Activated T-helper 1 cell treated with anti-CD3 and anti-CD28 coated beads, Interleukin-12 subunit alpha, Interleukin-12 subunit beta, Interleukin-2, Interleukin-4 antibody, amounts not matched to agents 30 ng/mL and 10 ng/mL and 1 ng/mL, durations not matched to agents 14 hours and 24 hours and 36 hours (primary cell): ENCODE measurements at regions of chr6 and their contacts with region 1.

Region 1: DNA sequence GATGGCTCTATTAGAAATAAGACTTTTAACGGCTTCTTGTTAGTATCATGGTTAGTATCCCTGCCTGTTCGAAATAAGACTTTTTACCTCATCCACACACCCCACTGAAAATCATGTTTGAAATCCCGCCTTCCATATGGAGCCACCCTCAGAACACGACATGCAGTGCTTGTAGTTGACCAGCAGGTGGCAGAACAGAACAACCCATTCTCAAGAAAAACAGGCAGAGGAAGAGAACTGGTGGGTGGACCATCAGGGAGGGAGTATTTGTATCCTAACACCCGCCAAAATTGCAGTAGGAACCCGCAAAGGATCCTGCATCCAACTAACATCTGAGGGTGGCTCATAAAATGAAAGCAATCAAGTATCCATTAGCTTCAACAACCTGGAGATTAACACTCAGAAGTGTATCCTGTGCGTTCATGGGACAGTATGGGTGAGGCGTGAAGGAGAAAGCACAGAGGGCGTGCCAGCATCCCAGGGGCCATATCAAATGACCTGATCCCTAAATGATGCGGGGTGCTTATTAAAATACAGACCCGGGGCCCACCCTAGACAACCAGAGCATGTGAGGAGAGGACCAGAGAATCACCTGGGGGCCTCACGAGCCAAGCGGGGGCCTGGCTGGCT is 89.6 kb upstream of the NHSL1 start:
- DNase-seq: peak; percentile 39
- H3K4me3 Mint-ChIP-seq: no peak overlapping the region
- H3K27ac Mint-ChIP-seq: no peak overlapping the region
- H3K4me1 Mint-ChIP-seq: peaks cover 27% of the 10 kb centered on the region
- H3K27me3 Mint-ChIP-seq: peaks cover 5% of the 10 kb centered on the region

Region 2: DNA sequence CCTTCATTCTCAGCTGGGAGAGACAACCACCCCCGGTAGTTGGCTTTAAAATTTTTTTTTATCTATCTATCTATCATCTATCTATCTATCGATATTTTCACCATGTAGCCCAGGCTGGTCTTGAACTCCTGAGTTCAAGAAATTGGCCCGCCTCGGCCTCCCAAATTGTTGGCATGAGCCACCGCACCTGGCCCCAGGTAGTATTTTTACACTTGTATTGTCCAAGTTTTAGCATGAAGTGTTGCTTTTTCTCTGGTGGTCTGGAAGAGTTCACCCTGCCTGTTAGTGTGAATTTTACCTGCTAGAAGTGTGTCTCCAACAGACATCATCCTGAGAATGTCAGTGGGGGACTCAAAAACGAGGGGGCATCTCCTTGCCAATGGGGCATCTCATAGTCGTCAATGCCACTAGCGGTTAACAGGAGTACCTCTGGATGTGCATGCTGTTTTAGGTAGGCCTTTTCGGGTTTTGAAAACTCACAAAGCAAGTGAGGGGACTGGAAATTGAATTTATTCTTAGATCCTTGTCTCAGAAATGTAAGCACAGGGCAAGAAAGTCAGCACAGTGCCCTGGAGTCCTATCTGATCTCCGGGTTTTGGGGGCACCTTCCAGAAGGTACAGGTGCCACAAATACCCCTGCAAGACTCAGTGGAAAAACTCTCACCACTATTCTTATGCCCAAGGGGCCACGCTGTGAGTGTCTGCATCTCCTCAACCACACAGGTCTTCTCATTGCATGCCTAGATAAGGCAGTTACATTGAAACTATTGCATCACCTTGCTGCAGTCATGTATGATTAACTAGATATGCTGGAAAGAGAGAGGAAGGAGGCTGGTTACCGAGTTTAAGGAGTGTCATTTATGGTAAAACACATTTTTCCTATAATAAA is 684.7 kb before region 1 on chr6:
- intact Hi-C with region 1: loop called (anchors 5 kb)
- DNase-seq: no peak
- H3K4me3 Mint-ChIP-seq: peak overlapping the region; percentile 19
- H3K27ac Mint-ChIP-seq: peak overlapping the region; percentile 97
- H3K4me1 Mint-ChIP-seq: peaks cover 59% of the 10 kb centered on the region
- H3K27me3 Mint-ChIP-seq: no peaks in the 10 kb centered on the region

Region 3: DNA sequence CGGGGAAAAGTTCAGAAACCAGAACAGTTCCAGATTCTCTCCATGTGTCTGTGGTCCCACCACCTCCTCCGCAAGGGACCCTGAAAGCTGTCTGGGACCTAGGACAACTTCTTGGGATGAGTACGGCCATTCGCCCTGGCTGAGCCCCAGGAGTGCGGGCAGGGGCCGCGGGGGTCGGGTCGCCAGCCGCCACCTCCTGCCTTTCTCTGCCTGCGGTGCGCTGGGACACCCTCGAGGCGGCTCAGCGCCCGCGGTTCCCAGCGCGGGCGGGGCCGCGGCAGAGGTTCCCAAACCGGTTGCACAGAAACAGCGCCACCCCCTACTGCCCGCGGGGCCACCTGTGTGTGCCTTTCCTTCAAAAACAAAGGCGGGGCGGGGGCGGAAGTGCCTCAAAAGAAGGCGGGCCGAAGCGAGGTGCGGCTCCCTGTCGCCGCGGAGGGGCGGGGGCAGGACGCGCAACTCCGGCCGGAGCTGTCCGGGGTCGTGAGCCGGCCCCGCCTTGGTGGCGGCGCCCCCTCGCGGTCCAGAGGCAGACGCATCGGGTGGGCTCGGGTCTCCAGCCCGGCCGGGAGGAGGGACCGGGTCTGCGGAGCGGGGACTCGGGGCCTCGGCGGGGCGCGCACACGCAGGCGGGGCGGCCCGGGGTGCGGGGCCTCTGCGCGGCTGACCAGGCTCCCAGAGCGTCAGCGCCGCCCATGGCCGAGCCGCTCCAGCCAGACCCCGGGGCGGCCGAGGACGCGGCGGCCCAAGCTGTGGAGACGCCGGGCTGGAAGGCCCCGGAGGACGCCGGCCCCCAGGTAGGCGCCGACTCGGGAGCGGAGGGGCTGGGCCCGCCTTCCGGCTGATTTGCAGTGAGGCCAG is 184.9 kb before region 1 on chr6 and contains the start of gene HEBP2:
- intact Hi-C with region 1: loop called (anchors 2 kb)
- DNase-seq: peak; percentile 87
- H3K4me3 Mint-ChIP-seq: peak within 1 kb of the TSS; percentile 84
- H3K27ac Mint-ChIP-seq: peak within 1 kb of the TSS; percentile 59
- H3K4me1 Mint-ChIP-seq: peaks cover 18% of the 10 kb centered on the region
- H3K27me3 Mint-ChIP-seq: peaks cover 8% of the 10 kb centered on the region
- total RNA-seq, gene HEBP2: 18.9 and 21.4 TPM in 2 replicates

Region 4: GRCh38 chr6:138455746-138456400 is 133.0 kb before region 1 on chr6:
- intact Hi-C with region 1: loop called (anchors 1 kb)
- DNase-seq: no peak
- H3K4me3 Mint-ChIP-seq: peak overlapping the region; percentile 38
- H3K27ac Mint-ChIP-seq: peak overlapping the region; percentile 27
- H3K4me1 Mint-ChIP-seq: peaks cover 22% of the 10 kb centered on the region
- H3K27me3 Mint-ChIP-seq: no peaks in the 10 kb centered on the region

Region 5: DNA sequence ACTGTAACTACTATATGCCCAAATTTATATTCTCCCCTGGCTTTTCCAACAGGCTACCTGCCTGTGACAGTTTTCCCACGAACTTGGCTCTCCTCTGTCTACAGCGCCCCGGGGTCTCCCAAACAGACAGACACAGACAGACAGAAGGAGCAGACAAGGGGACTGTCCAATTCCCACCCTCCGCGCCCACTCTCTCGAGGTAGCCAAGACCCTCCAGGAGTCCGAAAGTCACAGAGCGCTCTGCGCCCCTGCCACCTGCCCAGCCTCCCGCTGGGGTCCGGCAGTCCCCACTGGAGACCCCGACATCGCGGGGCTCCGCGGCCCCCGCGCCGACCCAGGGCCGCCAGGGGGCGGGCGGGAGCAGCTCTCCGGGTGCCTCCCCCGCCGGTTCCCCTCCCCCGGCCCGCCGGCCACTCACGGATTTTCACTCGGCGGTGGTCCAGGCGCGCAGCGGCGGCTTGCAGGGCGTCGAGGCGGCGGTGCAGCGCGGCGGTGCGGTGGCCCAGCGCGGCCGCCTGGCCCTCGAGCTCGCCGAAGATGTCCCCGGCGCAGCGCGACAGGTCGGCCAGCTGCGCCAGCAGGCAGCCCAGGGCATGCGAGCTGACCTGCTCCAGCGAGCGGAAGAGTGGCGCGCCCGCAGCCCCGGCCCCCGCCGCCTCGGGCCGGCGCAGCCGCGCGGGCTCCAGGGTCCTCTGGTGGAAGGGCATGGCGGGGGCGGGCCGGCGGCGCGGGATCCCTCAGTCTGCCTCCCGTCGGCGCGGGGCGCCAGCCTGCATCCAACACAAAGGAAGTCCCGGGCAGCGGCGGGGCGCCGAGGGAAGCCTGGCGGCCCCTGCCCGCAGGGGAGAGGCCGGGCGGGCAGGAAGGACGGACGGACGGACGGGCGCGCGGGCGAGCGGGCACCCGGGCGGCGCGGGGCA is 103.4 kb after region 1 on chr6:
- intact Hi-C with region 1: loop called (anchors 1 kb)
- DNase-seq: peak; percentile 44
- H3K4me3 Mint-ChIP-seq: peak overlapping the region; percentile 75
- H3K27ac Mint-ChIP-seq: peak overlapping the region; percentile 11
- H3K4me1 Mint-ChIP-seq: peaks cover 11% of the 10 kb centered on the region
- H3K27me3 Mint-ChIP-seq: peaks cover 50% of the 10 kb centered on the region

Region 6: DNA sequence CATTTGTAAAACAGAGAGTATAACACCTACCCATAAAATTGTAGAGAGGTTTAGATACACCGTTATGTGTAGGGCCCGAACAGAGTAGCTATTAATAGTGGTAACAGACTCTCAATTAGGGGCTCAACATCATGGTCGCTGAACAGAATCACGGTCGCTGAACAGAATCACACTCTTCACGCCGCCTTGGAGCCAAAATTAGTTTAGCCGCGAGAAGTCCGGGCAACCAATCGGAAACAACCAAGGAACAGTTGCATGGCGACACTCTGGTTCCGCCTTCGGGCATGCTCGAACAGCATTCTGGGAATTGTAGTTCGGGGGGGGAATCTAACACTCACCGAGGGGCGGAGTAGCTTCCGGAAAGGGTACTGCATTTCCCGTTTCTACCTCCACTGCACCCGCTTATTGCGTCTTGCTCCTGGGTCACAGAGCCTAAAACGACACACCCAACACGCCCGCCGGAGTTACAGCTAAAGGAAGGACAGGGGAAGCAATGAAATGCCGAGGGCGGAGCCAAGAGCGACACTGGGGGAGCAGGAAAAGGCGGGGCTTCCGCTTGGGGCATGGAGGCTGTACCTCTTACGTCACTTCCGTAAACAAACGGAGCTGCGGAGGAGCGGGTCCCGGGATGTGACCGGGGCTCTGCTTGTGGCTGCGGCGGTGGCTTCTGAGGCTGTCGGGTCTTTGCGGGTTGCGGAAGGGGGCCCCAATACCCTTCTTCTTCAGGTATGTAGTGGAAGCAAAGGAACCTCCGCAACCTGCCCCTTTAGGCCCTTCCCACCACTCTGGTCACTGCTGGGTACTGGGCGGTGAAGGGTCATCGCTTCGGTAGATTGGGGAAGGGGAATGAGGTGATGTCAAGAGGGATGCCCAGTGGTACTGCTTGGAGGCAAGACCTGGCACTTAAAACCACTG is 184.5 kb after region 1 on chr6 and contains the start of gene CCDC28A:
- intact Hi-C with region 1: loop called (anchors 1 kb)
- DNase-seq: peak; percentile 89
- H3K4me3 Mint-ChIP-seq: peak within 1 kb of the TSS; percentile 99
- H3K27ac Mint-ChIP-seq: peak within 1 kb of the TSS; percentile 100
- H3K4me1 Mint-ChIP-seq: peaks cover 23% of the 10 kb centered on the region
- H3K27me3 Mint-ChIP-seq: no peaks in the 10 kb centered on the region
- total RNA-seq, gene CCDC28A: 16.1 and 17.9 TPM in 2 replicates

Region 7: GRCh38 chr6:138817822-138818308 is 228.9 kb after region 1 on chr6:
- intact Hi-C with region 1: no loop called
- DNase-seq: no peak
- H3K4me3 Mint-ChIP-seq: no peak overlapping the region
- H3K27ac Mint-ChIP-seq: peak overlapping the region; percentile 78
- H3K4me1 Mint-ChIP-seq: peaks cover 36% of the 10 kb centered on the region
- H3K27me3 Mint-ChIP-seq: no peaks in the 10 kb centered on the region

Region 8: DNA sequence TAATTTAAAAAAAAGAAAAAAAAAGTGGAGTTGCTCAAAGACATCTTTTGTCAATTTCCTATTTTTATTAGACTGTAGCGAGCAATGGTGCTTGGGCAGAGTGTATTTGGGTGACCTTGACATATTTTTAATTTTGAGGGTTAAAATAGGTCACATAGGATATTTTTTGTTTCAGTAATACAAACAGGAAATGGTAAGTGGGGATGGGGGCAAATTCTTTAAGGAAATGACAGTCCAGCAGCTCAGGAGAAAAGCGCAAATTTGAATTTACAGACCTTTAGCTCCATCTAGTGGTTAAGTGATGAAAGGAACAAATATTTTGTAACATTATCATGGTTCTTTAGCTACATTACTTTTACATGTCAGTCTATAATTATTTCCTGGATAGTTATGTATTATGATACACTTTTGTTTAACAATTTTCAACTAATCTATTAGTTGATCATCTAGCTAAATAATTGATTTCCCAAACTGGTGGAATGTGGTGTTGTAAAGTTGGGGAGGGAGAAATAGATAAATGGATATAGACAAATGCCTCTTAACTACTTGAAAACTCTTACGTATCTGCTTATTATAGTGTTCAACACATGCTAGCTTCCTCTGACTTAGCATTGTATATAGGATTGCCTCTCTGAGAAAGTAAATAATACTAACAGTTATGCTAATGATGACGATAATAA is 775.5 kb after region 1 on chr6:
- intact Hi-C with region 1: loop called (anchors 1 kb)
- DNase-seq: no peak
- H3K4me3 Mint-ChIP-seq: no peak overlapping the region
- H3K27ac Mint-ChIP-seq: no peak overlapping the region
- H3K4me1 Mint-ChIP-seq: peaks cover 47% of the 10 kb centered on the region
- H3K27me3 Mint-ChIP-seq: peaks cover 4% of the 10 kb centered on the region